Ovary (tissue), 10 donors: ENCODE measurements at regions of chr15 and their contacts with region 1.

Region 1: GRCh38 chr15:84588053-84588874 is 12.5 kb upstream of the ZSCAN2 start:
- DNase-seq: peak; percentile 82 to 89 (median 86)
- H3K4me3 ChIP-seq: peak overlapping the region; percentile 28
- H3K27ac ChIP-seq: no peak overlapping the region
- H3K4me1 ChIP-seq: peaks cover 3% of the 10 kb centered on the region
- H3K27me3 ChIP-seq: no peaks in the 10 kb centered on the region
- CTCF ChIP-seq: peak; percentile 55 to 85 (median 58)
- EP300 ChIP-seq: no peak
- POLR2A ChIP-seq: no peak

Region 2: DNA sequence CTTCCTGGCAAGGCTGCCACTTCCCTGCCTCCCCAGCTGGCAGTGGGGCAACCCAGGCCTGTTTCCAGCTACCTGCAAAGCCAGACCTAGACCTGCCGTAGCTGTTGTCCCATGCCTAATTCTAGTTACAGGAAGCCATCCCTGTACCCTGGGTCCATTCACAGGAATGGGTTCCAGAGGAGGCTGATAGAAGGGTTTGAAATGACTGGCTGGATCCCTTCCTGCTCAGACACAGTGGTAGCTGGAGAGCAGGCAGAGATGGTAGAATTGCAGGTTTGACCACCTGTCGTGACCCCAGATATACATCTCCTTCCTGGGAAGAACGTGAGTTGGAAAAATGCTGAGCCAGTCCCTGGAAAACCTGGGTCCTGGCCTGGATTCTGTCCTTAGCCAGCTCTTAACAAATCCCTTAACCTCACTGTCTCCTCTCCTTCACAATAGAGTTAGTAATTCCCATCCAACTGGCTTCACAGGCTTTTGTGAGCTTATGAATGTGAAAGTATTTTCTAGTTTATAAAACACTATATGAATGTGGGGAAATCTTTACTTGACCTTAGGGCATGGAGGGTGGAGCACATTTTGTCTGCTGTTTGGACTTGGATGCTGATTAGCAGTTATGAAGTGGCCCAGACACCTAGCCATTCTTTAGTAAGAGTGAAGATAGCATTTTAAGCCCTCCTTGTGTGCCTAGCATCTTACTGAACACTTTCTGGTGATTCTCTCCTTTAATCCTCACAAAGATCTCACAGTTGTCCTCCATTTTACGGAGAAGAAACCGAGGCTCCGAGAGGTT is 216.1 kb after region 1 on chr15:
- intact Hi-C with region 1: no loop called
- DNase-seq: no peak
- H3K4me3 ChIP-seq: no peak overlapping the region
- H3K27ac ChIP-seq: no peak overlapping the region
- H3K4me1 ChIP-seq: no peaks in the 10 kb centered on the region
- H3K27me3 ChIP-seq: no peaks in the 10 kb centered on the region
- CTCF ChIP-seq: no peak
- EP300 ChIP-seq: no peak
- POLR2A ChIP-seq: no peak

Region 3: GRCh38 chr15:84818261-84819131 is 230.2 kb after region 1 on chr15:
- intact Hi-C with region 1: loop called in 1 of 4 experiments (anchors 1 kb)
- DNase-seq: peak in 1 of 5 donors; percentile 16
- H3K4me3 ChIP-seq: no peak overlapping the region
- H3K27ac ChIP-seq: peak overlapping the region in 1 of 2 donors; percentile 29
- H3K4me1 ChIP-seq: peaks cover 11% of the 10 kb centered on the region
- H3K27me3 ChIP-seq: no peaks in the 10 kb centered on the region
- CTCF ChIP-seq: no peak
- EP300 ChIP-seq: no peak
- POLR2A ChIP-seq: no peak